Spleen (tissue), 13 donors: ENCODE measurements at regions of chr3 and their contacts with region 1.

Region 1: DNA sequence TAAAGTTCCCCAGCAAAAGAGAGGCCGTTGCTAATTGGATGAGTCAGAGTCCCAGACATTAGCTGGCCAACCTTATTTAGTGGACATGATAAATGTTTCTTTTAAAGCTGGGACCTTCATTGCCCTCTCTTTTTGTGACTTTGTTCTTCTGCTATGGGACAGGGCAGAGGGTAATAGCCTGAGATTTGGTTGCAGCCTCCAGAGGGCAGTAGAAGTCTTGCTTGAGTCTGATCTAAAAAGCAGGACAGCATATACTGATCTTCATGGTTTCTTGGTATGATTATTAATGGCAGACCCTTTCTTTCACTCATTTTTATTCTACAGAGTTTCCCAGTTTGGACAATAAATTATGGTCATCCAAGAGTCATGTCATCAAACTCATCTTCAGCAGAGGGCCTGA is 25.1 kb upstream of the ZKSCAN7 start:
- DNase-seq: no peak
- H3K4me3 ChIP-seq: no peak overlapping the region
- H3K27ac ChIP-seq: no peak overlapping the region
- H3K4me1 ChIP-seq: no peaks in the 10 kb centered on the region
- H3K27me3 ChIP-seq: peaks cover 0 to 50% (median 4%) of the 10 kb centered on the region in 7 donors
- CTCF ChIP-seq: peak in 2 of 11 experiments; percentile 9 to 22
- POLR2A ChIP-seq: no peak

Region 2: GRCh38 chr3:44913868-44914468 is 384.0 kb after region 1 on chr3:
- intact Hi-C with region 1: loop called (anchors 2 kb)
- DNase-seq: peak; percentile 84
- H3K4me3 ChIP-seq: no peak overlapping the region
- H3K27ac ChIP-seq: no peak overlapping the region
- H3K4me1 ChIP-seq: peaks cover 0 to 4% (median 0%) of the 10 kb centered on the region in 6 donors
- H3K27me3 ChIP-seq: peaks cover 0 to 10% (median 0%) of the 10 kb centered on the region in 7 donors
- CTCF ChIP-seq: peak; percentile 36 to 86 (median 67)
- POLR2A ChIP-seq: no peak